Activated T-helper 2 cell treated with anti-CD3 and anti-CD28 coated beads, Interferon-gamma antibody, Interleukin-2, Interleukin-4, amounts not matched to agents 10 μg/mL and 5 μg/mL and 100 μg/mL, durations not matched to agents 14 hours and 24 hours and 36 hours (primary cell): ENCODE measurements at regions of chr1 and their contacts with region 1.

Region 1: DNA sequence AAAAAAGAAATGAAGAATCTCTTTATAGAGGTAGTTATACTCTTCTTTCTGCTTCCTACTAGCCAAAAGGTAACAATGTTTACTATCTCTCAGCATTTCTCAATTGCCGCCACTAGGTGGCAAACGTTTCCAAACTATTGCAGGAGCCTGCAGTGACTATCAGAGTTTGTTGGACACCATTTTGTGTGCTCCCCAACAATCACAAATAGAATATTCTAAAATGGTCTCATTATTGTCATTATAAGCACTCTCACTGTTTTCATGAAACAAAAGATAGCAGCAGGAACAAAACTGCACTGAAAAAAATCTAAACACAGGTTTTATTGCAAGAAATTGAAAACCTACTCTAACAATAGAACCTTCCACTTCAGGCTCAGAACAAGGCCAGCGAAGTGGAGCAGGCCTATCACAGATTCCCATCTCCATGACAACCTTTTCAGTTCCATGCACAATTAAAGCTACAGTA is 83.9 kb upstream of the PLPPR4 start:
- DNase-seq: peak; percentile 32
- H3K4me3 Mint-ChIP-seq: no peak overlapping the region
- H3K27ac Mint-ChIP-seq: no peak overlapping the region
- H3K4me1 Mint-ChIP-seq: no peaks in the 10 kb centered on the region
- H3K27me3 Mint-ChIP-seq: peaks cover 3% of the 10 kb centered on the region

Region 2: GRCh38 chr1:98794196-98794886 is 386.0 kb before region 1 on chr1:
- intact Hi-C with region 1: loop called (anchors 10 kb)
- DNase-seq: peak; percentile 22
- H3K4me3 Mint-ChIP-seq: no peak overlapping the region
- H3K27ac Mint-ChIP-seq: no peak overlapping the region
- H3K4me1 Mint-ChIP-seq: peaks cover 12% of the 10 kb centered on the region
- H3K27me3 Mint-ChIP-seq: peaks cover 10% of the 10 kb centered on the region

Region 3: GRCh38 chr1:99252630-99253029 is 72.3 kb after region 1 on chr1:
- intact Hi-C with region 1: no loop called
- DNase-seq: no peak
- H3K4me3 Mint-ChIP-seq: no peak overlapping the region
- H3K27ac Mint-ChIP-seq: no peak overlapping the region
- H3K4me1 Mint-ChIP-seq: no peaks in the 10 kb centered on the region
- H3K27me3 Mint-ChIP-seq: no peaks in the 10 kb centered on the region

Region 4: GRCh38 chr1:99481391-99481996 is 301.1 kb after region 1 on chr1:
- intact Hi-C with region 1: loop called (anchors 1 kb)
- DNase-seq: no peak
- H3K4me3 Mint-ChIP-seq: no peak overlapping the region
- H3K27ac Mint-ChIP-seq: no peak overlapping the region
- H3K4me1 Mint-ChIP-seq: no peaks in the 10 kb centered on the region
- H3K27me3 Mint-ChIP-seq: peaks cover 5% of the 10 kb centered on the region

Region 5: GRCh38 chr1:99685516-99686180 is 505.3 kb after region 1 on chr1:
- intact Hi-C with region 1: loop called (anchors 2 kb)
- DNase-seq: peak; percentile 22
- H3K4me3 Mint-ChIP-seq: no peak overlapping the region
- H3K27ac Mint-ChIP-seq: no peak overlapping the region
- H3K4me1 Mint-ChIP-seq: no peaks in the 10 kb centered on the region
- H3K27me3 Mint-ChIP-seq: peaks cover 14% of the 10 kb centered on the region

Region 6: GRCh38 chr1:99707535-99708142 is 527.3 kb after region 1 on chr1:
- intact Hi-C with region 1: loop called (anchors 1 kb)
- DNase-seq: peak; percentile 37
- H3K4me3 Mint-ChIP-seq: no peak overlapping the region
- H3K27ac Mint-ChIP-seq: no peak overlapping the region
- H3K4me1 Mint-ChIP-seq: peaks cover 6% of the 10 kb centered on the region
- H3K27me3 Mint-ChIP-seq: no peaks in the 10 kb centered on the region